ENCODE measurements at regions of chr16 and their contacts with region 1.

Region 1: DNA sequence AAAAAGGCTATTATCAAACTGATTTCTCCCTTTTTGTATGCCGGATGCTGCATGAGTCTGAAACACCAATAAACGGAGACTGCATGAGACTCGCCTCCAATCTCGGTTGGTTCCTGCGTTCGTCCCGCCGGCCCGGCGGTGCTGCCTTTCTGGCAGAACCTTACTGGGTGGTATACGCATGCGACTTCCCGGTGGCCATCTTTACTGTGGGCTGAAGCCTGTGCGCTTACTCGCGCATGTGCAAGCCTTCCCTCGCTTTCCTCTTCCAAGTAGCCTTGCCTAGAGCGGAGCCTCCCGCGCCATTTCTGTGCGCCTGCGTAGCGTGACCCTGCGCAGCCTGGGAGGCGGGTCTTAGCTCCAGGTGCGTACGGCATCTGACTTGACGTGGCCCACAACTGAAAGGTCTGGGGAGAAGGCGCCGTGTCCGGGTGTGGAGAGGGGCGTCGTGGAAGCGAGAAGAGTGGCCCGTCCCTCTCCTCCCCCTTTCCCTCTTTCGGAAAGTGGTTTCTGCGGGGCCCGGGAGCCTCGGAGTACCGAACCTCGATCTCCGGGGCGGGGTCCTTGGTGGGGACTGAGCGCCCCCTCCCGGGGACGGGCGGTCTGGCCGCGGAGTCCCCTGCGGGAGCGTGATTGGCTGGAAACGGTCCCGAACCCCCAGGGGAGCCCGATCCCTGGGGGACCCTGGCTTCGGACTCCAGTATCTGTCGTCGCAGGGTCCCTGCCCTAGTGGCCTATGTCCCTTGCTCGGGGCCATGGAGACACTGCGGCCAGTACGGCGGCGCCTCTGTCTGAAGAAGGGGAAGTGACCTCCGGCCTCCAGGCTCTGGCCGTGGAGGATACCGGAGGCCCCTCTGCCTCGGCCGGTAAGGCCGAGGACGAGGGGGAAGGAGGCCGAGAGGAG is at the start of gene PAGR1:
- DNase-seq: peak; percentile 99
- H3K4me3 Mint-ChIP-seq: peak within 1 kb of the TSS; percentile 98
- H3K27ac Mint-ChIP-seq: peak within 1 kb of the TSS; percentile 90
- H3K4me1 Mint-ChIP-seq: peaks cover 41% of the 10 kb centered on the region
- H3K27me3 Mint-ChIP-seq: no peaks in the 10 kb centered on the region
- total RNA-seq, gene PAGR1: 21.9 to 24.0 TPM

Region 2: GRCh38 chr16:28823872-28824716 is 991.9 kb before region 1 on chr16:
- CTCF ChIA-PET with region 1: no interaction called
- POLR2A ChIA-PET with region 1: no interaction called
- intact Hi-C with region 1: loop called (anchors 10 kb)
- DNase-seq: peak; percentile 98
- H3K4me3 Mint-ChIP-seq: peak overlapping the region; percentile 94
- H3K27ac Mint-ChIP-seq: peak overlapping the region; percentile 99
- H3K4me1 Mint-ChIP-seq: peaks cover 39% of the 10 kb centered on the region
- H3K27me3 Mint-ChIP-seq: no peaks in the 10 kb centered on the region

Region 3: DNA sequence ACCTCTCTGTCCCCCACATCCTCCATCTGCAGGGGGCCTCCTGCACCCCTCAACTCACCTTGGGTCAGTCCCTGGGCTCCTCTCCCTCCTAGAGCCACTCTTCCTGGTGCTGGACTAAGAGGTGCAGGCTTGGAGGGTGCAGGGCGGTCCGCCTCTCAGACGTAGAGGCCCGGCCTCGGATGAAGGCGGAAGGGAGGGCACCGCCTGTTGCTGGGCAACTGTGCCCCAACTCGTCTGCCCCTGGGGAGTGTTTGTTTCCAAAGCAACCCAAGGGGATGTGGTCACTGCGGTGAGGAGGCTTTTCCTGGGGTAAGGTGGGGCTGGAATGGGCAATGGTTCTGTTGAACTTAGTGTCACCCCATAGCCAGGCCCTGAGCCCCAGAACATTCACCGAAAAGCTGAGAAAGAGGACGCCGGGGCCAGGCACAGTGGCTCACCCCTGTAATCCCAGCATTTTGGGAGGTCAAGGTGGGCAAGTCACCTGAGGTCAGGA is 70.1 kb before region 1 on chr16 and contains the start of gene C16orf54:
- CTCF ChIA-PET with region 1: interaction called, 5 read pairs
- POLR2A ChIA-PET with region 1: interaction called, 3 read pairs
- intact Hi-C with region 1: loop called (anchors 2 kb)
- DNase-seq: peak; percentile 97
- H3K4me3 Mint-ChIP-seq: peak within 1 kb of the TSS; percentile 97
- H3K27ac Mint-ChIP-seq: peak within 1 kb of the TSS; percentile 98
- H3K4me1 Mint-ChIP-seq: peaks cover 60% of the 10 kb centered on the region
- H3K27me3 Mint-ChIP-seq: no peaks in the 10 kb centered on the region
- total RNA-seq, gene C16orf54: 25.2 to 26.2 TPM

Region 4: DNA sequence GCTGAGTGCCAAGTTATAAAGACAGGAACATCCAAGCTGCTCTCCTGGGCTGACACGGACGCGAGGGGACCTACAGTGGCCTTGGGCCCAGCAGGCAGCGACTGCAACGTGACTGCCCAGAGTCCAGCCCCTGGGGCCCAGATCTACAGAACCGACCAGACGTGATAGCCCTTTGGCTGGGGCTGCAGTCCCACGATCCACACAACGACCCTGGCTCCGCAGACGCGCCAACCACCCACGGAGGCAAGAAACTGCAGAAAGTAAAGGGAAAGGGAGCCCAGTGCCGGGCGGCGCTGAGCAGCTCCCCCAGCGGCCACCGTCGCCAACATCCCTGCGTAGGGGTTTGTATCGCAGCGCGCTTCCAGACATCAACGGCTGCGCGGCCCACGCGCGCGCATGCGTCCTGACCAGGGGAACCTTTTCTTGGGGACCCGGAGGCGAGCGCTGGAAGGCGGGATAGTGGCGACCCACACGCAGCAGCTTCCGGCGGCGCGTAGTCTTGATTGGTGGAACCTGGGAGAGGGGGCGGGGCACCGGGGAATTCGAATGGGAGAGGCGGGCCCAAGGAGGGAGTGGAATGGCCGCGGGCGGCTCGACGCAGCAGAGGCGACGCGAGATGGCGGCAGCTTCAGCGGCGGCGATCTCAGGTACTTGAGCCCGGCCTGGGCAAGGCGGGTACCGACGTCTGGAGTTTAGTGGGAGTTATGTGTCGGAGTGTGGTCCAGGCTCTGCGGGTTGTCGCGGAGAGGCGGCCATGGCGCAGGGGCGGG is 25.7 kb before region 1 on chr16 and contains the start of gene KIF22:
- CTCF ChIA-PET with region 1: interaction called, 16 read pairs
- POLR2A ChIA-PET with region 1: interaction called, 11 read pairs
- intact Hi-C with region 1: no loop called
- DNase-seq: peak; percentile 100
- H3K4me3 Mint-ChIP-seq: peak within 1 kb of the TSS; percentile 100
- H3K27ac Mint-ChIP-seq: peak within 1 kb of the TSS; percentile 97
- H3K4me1 Mint-ChIP-seq: peaks cover 38% of the 10 kb centered on the region
- H3K27me3 Mint-ChIP-seq: no peaks in the 10 kb centered on the region
- total RNA-seq, gene KIF22: 174 to 180 TPM

Region 5: GRCh38 chr16:29862884-29863668 is 47.0 kb after region 1 on chr16 and contains the start of gene CDIPT:
- CTCF ChIA-PET with region 1: interaction called, 3 read pairs
- POLR2A ChIA-PET with region 1: no interaction called
- intact Hi-C with region 1: loop called (anchors 1 kb)
- DNase-seq: peak; percentile 95
- H3K4me3 Mint-ChIP-seq: peak within 1 kb of the TSS; percentile 94
- H3K27ac Mint-ChIP-seq: peak within 1 kb of the TSS; percentile 92
- H3K4me1 Mint-ChIP-seq: peaks cover 18% of the 10 kb centered on the region
- H3K27me3 Mint-ChIP-seq: no peaks in the 10 kb centered on the region
- total RNA-seq, gene CDIPT: 39.5 to 43.9 TPM

Region 6: GRCh38 chr16:29961479-29962343 is 145.7 kb after region 1 on chr16 and contains the start of gene TMEM219:
- CTCF ChIA-PET with region 1: no interaction called
- POLR2A ChIA-PET with region 1: no interaction called
- intact Hi-C with region 1: no loop called
- DNase-seq: peak; percentile 94
- H3K4me3 Mint-ChIP-seq: peak within 1 kb of the TSS; percentile 85
- H3K27ac Mint-ChIP-seq: peak within 1 kb of the TSS; percentile 83
- H3K4me1 Mint-ChIP-seq: peaks cover 16% of the 10 kb centered on the region
- H3K27me3 Mint-ChIP-seq: no peaks in the 10 kb centered on the region
- total RNA-seq, gene TMEM219: 57.1 to 64.8 TPM

Region 7: GRCh38 chr16:30370444-30371247 is 554.6 kb after region 1 on chr16 and contains the start of gene TBC1D10B:
- CTCF ChIA-PET with region 1: no interaction called
- POLR2A ChIA-PET with region 1: no interaction called
- intact Hi-C with region 1: loop called (anchors 10 kb)
- DNase-seq: peak; percentile 100
- H3K4me3 Mint-ChIP-seq: peak within 1 kb of the TSS; percentile 91
- H3K27ac Mint-ChIP-seq: peak within 1 kb of the TSS; percentile 95
- H3K4me1 Mint-ChIP-seq: peaks cover 34% of the 10 kb centered on the region
- H3K27me3 Mint-ChIP-seq: peaks cover 3% of the 10 kb centered on the region
- total RNA-seq, gene TBC1D10B: 54.7 to 54.8 TPM

Measured in activated CD4-positive, alpha-beta memory T cell treated with anti-CD3 and anti-CD28 coated beads for 36 hours (primary cell).